HepG2 (cell line): ENCODE measurements at regions of chr7 and their contacts with region 1.

Region 1: DNA sequence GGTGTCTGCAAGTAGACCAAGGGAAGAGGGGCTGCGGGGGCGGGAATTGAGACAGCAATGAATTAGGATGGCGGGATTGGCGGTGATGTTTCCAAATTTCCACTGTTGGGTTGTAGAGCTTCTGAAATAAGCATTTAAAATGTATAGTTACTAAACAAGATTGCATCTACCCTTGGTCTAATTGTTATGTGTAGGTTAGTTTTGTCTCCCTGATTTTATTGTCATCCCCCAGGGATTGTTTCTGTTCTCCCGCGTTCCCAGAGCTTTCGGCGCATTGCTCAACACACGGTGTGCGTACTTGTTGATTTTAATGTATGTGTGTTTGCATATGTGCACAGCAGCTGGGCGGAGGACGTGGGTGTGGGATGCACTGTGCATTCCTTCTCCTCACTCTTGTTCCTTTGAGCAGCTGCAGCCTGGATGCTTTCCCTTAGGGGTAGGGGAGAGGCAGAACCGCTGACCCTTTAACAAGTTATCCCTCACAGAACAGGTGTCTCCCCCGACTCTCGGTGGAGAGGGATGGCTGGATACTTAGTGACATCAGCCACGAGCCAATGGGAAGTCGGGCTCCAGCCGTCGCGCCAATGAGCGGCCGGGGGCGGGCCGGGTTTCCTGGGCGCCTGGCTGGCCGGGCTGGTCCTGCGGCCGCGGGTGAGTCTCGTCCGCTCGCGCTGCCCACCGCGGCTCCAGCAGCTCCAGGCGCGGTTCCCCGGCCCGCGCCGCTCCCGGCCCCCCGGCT is at the start of gene TSPAN33:
- DNase-seq: peak; percentile 66
- ATAC-seq: peak; percentile 99
- H3K4me3 ChIP-seq: peak within 1 kb of the TSS; percentile 71 to 83 (median 82)
- H3K27ac ChIP-seq: no peak within 1 kb of the TSS
- H3K4me1 ChIP-seq: peaks cover 26% of the 10 kb centered on the region
- H3K27me3 ChIP-seq: peaks cover 0 to 17% of the 10 kb centered on the region in 2 experiments; a peak in 2 of 5 replicates
- CTCF ChIP-seq: 0 out of 2 replicates have a peak, but pooled peaks have one; percentile 2
- EP300 ChIP-seq: no peak
- POLR2A ChIP-seq: peak in 1 of 2 experiments; percentile 41; a peak in 1 of 4 replicates
- RAD21 ChIP-seq: no peak
- total RNA-seq, gene TSPAN33: 12.9 and 15.3 TPM in 2 replicates

Region 2: GRCh38 chr7:128783143-128783861 is 361.0 kb before region 1 on chr7:
- CTCF ChIA-PET with region 1: no interaction called
- POLR2A ChIA-PET with region 1: no interaction called
- in situ Hi-C with region 1: no loop called
- intact Hi-C with region 1: no loop called
- DNase-seq: peak; percentile 61
- ATAC-seq: peak; percentile 82
- H3K4me3 ChIP-seq: peak overlapping the region in 2 of 3 experiments; percentile 50 to 51; a peak in 4 of 6 replicates
- H3K27ac ChIP-seq: no peak overlapping the region
- H3K4me1 ChIP-seq: peaks cover 15% of the 10 kb centered on the region
- H3K27me3 ChIP-seq: no peaks in the 10 kb centered on the region
- CTCF ChIP-seq: no peak
- EP300 ChIP-seq: no peak
- POLR2A ChIP-seq: no peak
- RAD21 ChIP-seq: no peak

Region 3: DNA sequence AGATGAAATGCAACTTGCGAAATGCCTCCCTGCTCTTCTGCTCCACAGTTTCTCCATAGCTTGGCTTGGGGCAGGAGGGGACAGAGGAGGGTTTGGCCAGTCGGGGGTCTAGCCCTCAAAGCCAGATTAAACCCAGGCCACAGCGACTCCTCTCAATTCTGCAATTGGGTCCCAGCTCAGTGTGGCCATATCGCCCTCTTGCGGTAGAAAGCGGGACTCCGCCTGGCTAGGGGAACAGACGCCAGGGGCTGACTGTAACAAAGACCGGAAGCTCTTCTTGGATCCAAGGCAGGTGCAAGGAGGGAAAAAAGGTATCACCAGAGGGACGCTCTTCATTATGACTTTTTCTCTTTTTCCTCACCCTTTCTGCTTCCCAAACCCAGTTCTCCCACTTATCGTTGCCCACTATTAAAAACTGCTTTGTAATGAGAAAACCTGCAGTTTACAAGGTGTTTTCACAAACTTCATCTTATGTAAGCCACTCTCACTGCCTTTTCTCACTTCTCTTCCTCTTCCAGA is 52.7 kb before region 1 on chr7:
- CTCF ChIA-PET with region 1: no interaction called
- POLR2A ChIA-PET with region 1: no interaction called
- in situ Hi-C with region 1: no loop called
- intact Hi-C with region 1: no loop called
- DNase-seq: peak; percentile 63
- ATAC-seq: peak; percentile 97
- H3K4me3 ChIP-seq: peak overlapping the region in 1 of 3 experiments; percentile 29; a peak in 2 of 6 replicates
- H3K27ac ChIP-seq: no peak overlapping the region
- H3K4me1 ChIP-seq: peaks cover 26% of the 10 kb centered on the region
- H3K27me3 ChIP-seq: no peaks in the 10 kb centered on the region
- CTCF ChIP-seq: peak; percentile 98
- EP300 ChIP-seq: no peak
- POLR2A ChIP-seq: no peak
- RAD21 ChIP-seq: peak; percentile 92

Region 4: DNA sequence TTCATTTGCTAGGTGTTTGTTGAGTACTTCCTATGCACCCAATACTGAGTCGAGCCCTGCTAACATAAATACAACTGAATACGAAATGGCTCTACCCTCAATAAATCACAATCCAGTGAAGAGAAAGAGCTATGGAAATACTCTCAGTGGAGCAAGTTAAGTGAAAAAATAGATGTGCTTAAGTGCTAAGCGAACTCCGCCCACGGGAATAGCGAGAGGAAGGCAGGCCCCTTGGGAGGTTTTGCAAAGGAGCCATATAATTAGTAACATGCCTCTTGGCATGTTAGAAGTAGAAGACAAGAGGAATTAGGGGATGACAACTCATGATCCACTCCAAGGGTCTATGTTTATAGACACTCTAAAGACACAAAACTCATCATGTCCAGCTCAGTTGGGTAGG is 42.5 kb before region 1 on chr7:
- CTCF ChIA-PET with region 1: no interaction called
- POLR2A ChIA-PET with region 1: interaction called, 3 read pairs
- in situ Hi-C with region 1: no loop called
- intact Hi-C with region 1: loop called (anchors 2 kb)
- DNase-seq: no peak
- ATAC-seq: no peak
- H3K4me3 ChIP-seq: no peak overlapping the region
- H3K27ac ChIP-seq: peak overlapping the region; percentile 79
- H3K4me1 ChIP-seq: peaks cover 60% of the 10 kb centered on the region
- H3K27me3 ChIP-seq: no peaks in the 10 kb centered on the region
- CTCF ChIP-seq: no peak
- EP300 ChIP-seq: no peak
- POLR2A ChIP-seq: no peak
- RAD21 ChIP-seq: no peak

Region 5: GRCh38 chr7:129169171-129169671 is 25.0 kb after region 1 on chr7:
- CTCF ChIA-PET with region 1: no interaction called
- POLR2A ChIA-PET with region 1: no interaction called
- in situ Hi-C with region 1: no loop called
- intact Hi-C with region 1: no loop called
- DNase-seq: no peak
- ATAC-seq: no peak
- H3K4me3 ChIP-seq: no peak overlapping the region
- H3K27ac ChIP-seq: no peak overlapping the region
- H3K4me1 ChIP-seq: no peaks in the 10 kb centered on the region
- H3K27me3 ChIP-seq: no peaks in the 10 kb centered on the region
- CTCF ChIP-seq: no peak
- EP300 ChIP-seq: no peak
- POLR2A ChIP-seq: no peak
- RAD21 ChIP-seq: no peak